PC-3 (cell line): ENCODE measurements at regions of chr5 and their contacts with region 1.

Region 1: DNA sequence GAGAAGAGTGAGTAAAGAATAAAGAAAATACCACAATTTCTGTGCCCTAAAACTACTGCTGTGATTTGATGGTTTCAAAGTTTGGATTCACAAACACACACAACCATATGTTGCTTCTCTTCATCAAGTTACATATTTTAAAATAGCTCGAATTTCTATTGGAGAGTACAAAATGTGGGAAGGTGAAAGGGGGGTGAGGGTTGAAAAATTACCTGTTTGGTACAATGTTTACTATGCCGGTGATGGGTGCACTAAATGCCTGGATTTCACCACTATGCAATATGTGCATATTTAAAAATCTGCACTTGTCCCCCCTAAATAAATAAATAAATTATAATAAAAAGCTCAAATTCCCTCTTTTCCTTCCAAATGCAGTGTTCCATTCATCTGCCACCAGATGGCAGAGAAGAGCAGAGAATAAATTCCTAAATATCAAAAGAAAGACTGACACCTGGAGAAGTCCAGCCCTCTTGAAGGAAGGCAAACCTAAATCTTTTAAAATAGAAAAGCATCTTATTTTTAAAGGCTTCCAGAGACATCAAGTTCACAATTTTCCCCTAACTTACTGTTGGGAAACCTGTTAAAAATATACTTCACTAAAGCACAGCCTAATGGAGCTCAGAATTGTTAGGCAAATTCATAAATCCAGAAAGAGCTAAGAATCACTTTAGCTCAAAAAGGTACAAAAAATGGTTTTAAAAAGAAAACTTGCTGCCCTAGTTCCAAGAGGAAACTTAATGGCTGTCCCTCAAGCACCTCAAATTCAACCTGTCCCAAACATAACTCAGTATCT is 24.8 kb upstream of the HNRNPA0 start:
- DNase-seq: peak; percentile 54
- ATAC-seq: peak; percentile 40; the same call in 1 of the 2 replicates
- H3K4me3 ChIP-seq: no peak overlapping the region
- H3K27ac ChIP-seq: no peak overlapping the region
- H3K4me1 ChIP-seq: no peaks in the 10 kb centered on the region
- H3K27me3 ChIP-seq: no peaks in the 10 kb centered on the region
- CTCF ChIP-seq: peak; percentile 67

Region 2: GRCh38 chr5:137822158-137822764 is 43.3 kb after region 1 on chr5:
- CTCF ChIA-PET with region 1: interaction called, 3 read pairs
- POLR2A ChIA-PET with region 1: no interaction called
- intact Hi-C with region 1: loop called (anchors 1 kb)
- DNase-seq: peak; percentile 70
- ATAC-seq: peak; percentile 67
- H3K4me3 ChIP-seq: no peak overlapping the region
- H3K27ac ChIP-seq: no peak overlapping the region
- H3K4me1 ChIP-seq: peaks cover 15% of the 10 kb centered on the region
- H3K27me3 ChIP-seq: no peaks in the 10 kb centered on the region
- CTCF ChIP-seq: peak; percentile 65

Region 3: DNA sequence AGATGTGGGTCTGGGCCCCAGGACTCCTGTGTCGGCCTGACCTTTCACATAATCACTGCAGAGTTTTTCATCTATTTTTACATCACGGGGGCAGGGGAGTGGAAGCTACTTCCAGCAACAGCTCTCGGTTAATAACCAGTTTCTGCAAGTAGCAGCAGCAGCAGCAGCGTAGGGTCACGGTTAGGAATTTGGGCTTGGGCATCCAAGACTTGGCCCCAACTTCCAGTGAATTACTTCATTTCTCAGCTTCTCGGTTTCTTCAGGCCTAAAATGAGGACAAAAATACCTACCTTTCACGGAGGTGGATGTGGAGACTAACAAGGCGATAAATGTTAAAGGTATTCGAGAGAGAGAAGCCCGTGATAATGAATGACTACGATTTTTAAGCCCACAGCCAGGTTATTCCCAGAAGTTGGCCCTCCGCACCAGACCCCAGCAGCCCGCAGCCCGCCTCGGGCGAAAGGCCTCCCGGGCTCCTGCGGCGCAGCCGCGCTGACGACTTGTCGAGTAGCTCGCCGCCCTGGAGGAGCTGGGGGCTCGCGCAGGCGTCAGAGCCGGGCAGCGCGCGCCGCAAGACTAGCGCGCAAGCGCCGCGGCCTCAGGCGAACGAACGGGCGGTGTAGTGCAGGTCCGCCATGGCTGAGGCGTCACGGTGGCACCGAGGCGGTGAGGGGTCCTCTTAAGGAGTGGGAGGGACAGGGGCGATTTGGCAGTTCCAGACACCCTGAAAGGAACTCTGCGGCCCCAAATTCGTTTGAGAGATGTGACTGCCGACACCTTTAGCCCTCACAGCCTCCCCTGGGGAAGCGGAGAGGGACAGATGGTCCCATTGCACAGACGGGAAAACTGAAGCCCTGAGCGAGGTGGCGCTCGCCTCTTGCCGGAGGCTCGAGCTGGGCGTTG is 110.1 kb after region 1 on chr5 and contains the start of gene PKD2L2:
- CTCF ChIA-PET with region 1: interaction called, 11 read pairs
- POLR2A ChIA-PET with region 1: no interaction called
- intact Hi-C with region 1: no loop called
- DNase-seq: peak; percentile 86
- ATAC-seq: peak; percentile 96
- H3K4me3 ChIP-seq: peak within 1 kb of the TSS; percentile 72
- H3K27ac ChIP-seq: peak within 1 kb of the TSS; percentile 69
- H3K4me1 ChIP-seq: peaks cover 28% of the 10 kb centered on the region
- H3K27me3 ChIP-seq: no peaks in the 10 kb centered on the region
- CTCF ChIP-seq: no peak
- total RNA-seq, gene PKD2L2: not detected in 2 replicates

Region 4: GRCh38 chr5:137923856-137924255 is 144.9 kb after region 1 on chr5:
- CTCF ChIA-PET with region 1: no interaction called
- POLR2A ChIA-PET with region 1: no interaction called
- intact Hi-C with region 1: no loop called
- DNase-seq: no peak
- ATAC-seq: no peak
- H3K4me3 ChIP-seq: no peak overlapping the region
- H3K27ac ChIP-seq: no peak overlapping the region
- H3K4me1 ChIP-seq: no peaks in the 10 kb centered on the region
- H3K27me3 ChIP-seq: no peaks in the 10 kb centered on the region
- CTCF ChIP-seq: no peak

Region 5: GRCh38 chr5:138065102-138065501 is 286.1 kb after region 1 on chr5:
- CTCF ChIA-PET with region 1: interaction called, 3 read pairs
- POLR2A ChIA-PET with region 1: no interaction called
- intact Hi-C with region 1: loop called (anchors 1 kb)
- DNase-seq: peak; percentile 3
- ATAC-seq: no peak
- H3K4me3 ChIP-seq: no peak overlapping the region
- H3K27ac ChIP-seq: no peak overlapping the region
- H3K4me1 ChIP-seq: no peaks in the 10 kb centered on the region
- H3K27me3 ChIP-seq: no peaks in the 10 kb centered on the region
- CTCF ChIP-seq: peak; percentile 56